ENCODE measurements at regions of chr18 and their contacts with region 1.

Region 1: GRCh38 chr18:9102508-9103375 is at the start of gene NDUFV2:
- DNase-seq: peak; percentile 98 to 99
- ATAC-seq: peak; percentile 98 to 100 (median 99)
- H3K4me3 ChIP-seq: peak within 1 kb of the TSS; percentile 55 to 85 (median 74)
- H3K27ac ChIP-seq: peak within 1 kb of the TSS; percentile 86 to 98 (median 94)
- H3K4me1 ChIP-seq: peaks cover 9 to 52% (median 51%) of the 10 kb centered on the region in 9 donors
- H3K27me3 ChIP-seq: no peaks in the 10 kb centered on the region
- CTCF ChIP-seq: peak in 1 of 9 donors; percentile 11
- total RNA-seq, gene NDUFV2: 362 to 529 (median 480) TPM

Region 2: GRCh38 chr18:9038277-9038871 is 64.4 kb before region 1 on chr18:
- intact Hi-C with region 1: no loop called
- DNase-seq: no peak
- ATAC-seq: no peak
- H3K4me3 ChIP-seq: no peak overlapping the region
- H3K27ac ChIP-seq: no peak overlapping the region
- H3K4me1 ChIP-seq: no peaks in the 10 kb centered on the region
- H3K27me3 ChIP-seq: no peaks in the 10 kb centered on the region
- CTCF ChIP-seq: no peak

Region 3: GRCh38 chr18:9082711-9083510 is 19.8 kb before region 1 on chr18:
- intact Hi-C with region 1: loop called in 1 of 10 experiments (anchors 2 kb)
- DNase-seq: no peak
- ATAC-seq: peak in 2 of 8 donors; percentile 56 to 57
- H3K4me3 ChIP-seq: no peak overlapping the region
- H3K27ac ChIP-seq: peak overlapping the region in 1 of 10 donors; percentile 77
- H3K4me1 ChIP-seq: peaks cover 0 to 57% (median 0%) of the 10 kb centered on the region in 9 donors
- H3K27me3 ChIP-seq: no peaks in the 10 kb centered on the region
- CTCF ChIP-seq: no peak

Region 4: DNA sequence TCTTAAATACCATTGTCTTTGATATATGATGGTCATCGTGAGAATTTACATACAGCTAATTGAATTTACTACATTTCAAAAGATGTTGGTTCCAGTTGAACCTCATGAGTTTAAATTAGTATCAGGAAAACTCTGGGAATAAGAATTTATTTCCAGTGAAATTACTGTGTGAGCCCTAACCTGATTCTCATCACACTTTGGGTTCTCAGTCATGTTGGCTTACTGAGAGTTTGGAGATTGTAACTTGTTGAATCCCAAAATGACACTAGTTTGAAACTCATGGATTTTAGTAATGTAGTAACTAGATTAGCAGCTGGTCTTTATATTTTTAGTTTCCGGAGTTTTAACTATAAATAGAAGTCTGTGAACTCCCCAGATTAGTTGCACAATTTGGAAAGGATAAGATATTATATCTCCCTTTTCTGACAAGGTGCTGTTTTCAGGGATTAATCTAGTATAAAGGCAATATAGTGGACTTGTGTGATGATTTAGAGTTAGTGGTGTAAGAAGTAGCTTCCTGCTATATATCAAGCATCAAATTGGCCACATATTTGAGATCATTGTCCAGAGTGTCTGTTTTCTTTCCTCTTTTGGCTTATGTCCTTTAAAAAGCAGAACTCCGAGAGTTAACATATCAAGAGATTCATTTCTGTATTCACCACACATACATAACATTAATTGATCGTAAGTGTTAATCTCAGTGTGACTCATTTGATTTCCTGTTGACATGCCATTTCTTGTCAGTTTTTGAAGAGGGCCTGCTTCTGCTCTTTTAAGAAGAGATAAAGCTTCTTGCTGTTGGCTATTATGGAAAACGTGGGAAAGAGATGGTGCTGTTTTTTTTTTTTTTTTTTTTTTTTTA is 15.5 kb after region 1 on chr18:
- intact Hi-C with region 1: loop called in 1 of 10 experiments (anchors 2 kb)
- DNase-seq: no peak
- ATAC-seq: peak in 6 of 8 donors; percentile 12 to 61 (median 26)
- H3K4me3 ChIP-seq: peak overlapping the region in 3 of 10 donors; percentile 5 to 37 (median 17)
- H3K27ac ChIP-seq: peak overlapping the region in 9 of 10 donors; percentile 8 to 89 (median 64)
- H3K4me1 ChIP-seq: peaks cover 11 to 97% (median 90%) of the 10 kb centered on the region in 9 donors
- H3K27me3 ChIP-seq: no peaks in the 10 kb centered on the region
- CTCF ChIP-seq: no peak

Region 5: GRCh38 chr18:9136315-9137155 is 33.8 kb after region 1 on chr18 and contains the start of gene ANKRD12:
- intact Hi-C with region 1: loop called in 9 of 10 experiments (anchors 1 to 5 kb)
- DNase-seq: peak; percentile 97 to 99
- ATAC-seq: peak; percentile 96 to 99 (median 97)
- H3K4me3 ChIP-seq: peak within 1 kb of the TSS; percentile 61 to 94 (median 80)
- H3K27ac ChIP-seq: peak within 1 kb of the TSS; percentile 92 to 99 (median 98)
- H3K4me1 ChIP-seq: peaks cover 0 to 65% (median 47%) of the 10 kb centered on the region in 9 donors
- H3K27me3 ChIP-seq: no peaks in the 10 kb centered on the region
- CTCF ChIP-seq: no peak
- total RNA-seq, gene ANKRD12: 34.5 to 70.2 (median 55.5) TPM

Region 6: GRCh38 chr18:9147440-9148202 is 44.9 kb after region 1 on chr18:
- intact Hi-C with region 1: loop called in 2 of 10 experiments (anchors 2 to 5 kb)
- DNase-seq: peak in 1 of 2 donors; percentile 37
- ATAC-seq: peak; percentile 81 to 91 (median 87)
- H3K4me3 ChIP-seq: no peak overlapping the region
- H3K27ac ChIP-seq: peak overlapping the region in 2 of 10 donors; percentile 42 to 69
- H3K4me1 ChIP-seq: peaks cover 2 to 100% (median 80%) of the 10 kb centered on the region in 9 donors
- H3K27me3 ChIP-seq: no peaks in the 10 kb centered on the region
- CTCF ChIP-seq: peak; percentile 59 to 90 (median 79)

Region 7: DNA sequence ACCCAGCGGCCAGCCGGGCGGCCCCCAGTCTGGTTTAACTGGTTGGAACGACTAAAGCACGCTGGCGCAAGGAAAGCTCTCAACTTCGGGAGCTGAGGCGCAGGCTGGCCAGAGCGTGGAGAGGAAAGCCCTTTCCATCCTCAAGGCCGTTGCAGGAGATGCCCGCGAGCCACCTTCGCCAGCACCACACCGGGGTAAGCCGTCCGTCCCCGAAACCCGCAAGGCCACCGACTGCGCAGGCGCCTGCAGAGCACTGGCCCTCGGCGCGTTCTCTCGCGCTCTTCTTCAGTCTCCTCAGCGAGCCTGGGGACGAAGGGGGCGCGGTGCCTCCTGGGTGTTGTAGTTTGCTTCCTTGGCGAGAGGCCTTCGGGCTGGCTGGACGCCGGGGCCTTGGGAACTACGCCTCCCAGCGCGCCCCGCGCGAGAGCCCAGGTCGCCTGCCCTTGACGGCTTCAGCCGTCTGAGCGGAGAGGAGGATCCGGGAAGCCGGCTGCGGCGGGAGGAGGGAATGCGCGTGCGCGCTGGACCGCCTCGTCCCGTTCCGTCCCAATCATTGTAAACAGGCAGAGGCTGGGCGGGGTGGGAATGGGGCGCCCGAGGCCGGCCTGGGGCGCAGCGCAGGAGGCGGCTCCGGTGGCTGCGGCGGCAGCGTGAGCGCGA is 372.4 kb after region 1 on chr18 and contains the start of gene RALBP1:
- intact Hi-C with region 1: loop called in 1 of 10 experiments (anchors 5 kb)
- DNase-seq: peak; percentile 99 to 100
- ATAC-seq: peak; percentile 97 to 100 (median 99)
- H3K4me3 ChIP-seq: peak within 1 kb of the TSS; percentile 63 to 98 (median 92)
- H3K27ac ChIP-seq: peak within 1 kb of the TSS; percentile 81 to 97 (median 93)
- H3K4me1 ChIP-seq: peaks cover 0 to 29% (median 22%) of the 10 kb centered on the region in 9 donors
- H3K27me3 ChIP-seq: no peaks in the 10 kb centered on the region
- CTCF ChIP-seq: peak in 4 of 9 donors; percentile 26 to 52 (median 50)
- total RNA-seq, gene RALBP1: 39.3 to 53.8 (median 41.8) TPM

Region 8: DNA sequence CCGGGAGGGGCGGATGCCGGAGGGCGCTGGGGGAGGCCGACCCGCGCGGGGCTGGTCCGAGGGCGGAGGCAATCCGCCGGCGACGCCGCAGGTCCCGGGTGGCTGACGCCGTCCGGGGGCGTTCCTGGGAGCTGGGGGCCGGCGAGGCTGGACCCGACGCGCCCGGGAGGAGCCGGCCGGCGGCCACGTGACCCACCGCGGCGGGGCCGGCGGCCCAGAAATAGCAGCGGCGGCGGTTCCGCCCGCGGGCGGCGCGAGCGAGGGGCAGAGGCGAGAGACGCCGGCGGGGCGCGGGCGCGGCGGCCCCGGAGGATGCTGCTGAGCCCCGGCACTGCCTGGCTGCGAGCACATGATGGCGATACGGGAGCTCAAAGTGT is 605.3 kb after region 1 on chr18 and contains the start of gene RAB31:
- intact Hi-C with region 1: no loop called
- DNase-seq: peak; percentile 78 to 86
- ATAC-seq: peak; percentile 87 to 97 (median 92)
- H3K4me3 ChIP-seq: peak within 1 kb of the TSS; percentile 23 to 89 (median 78)
- H3K27ac ChIP-seq: peak within 1 kb of the TSS; percentile 75 to 96 (median 88)
- H3K4me1 ChIP-seq: peaks cover 0 to 69% (median 18%) of the 10 kb centered on the region in 9 donors
- H3K27me3 ChIP-seq: no peaks in the 10 kb centered on the region
- CTCF ChIP-seq: no peak
- total RNA-seq, gene RAB31: 12.7 to 47.8 (median 17.0) TPM

Measured in heart right ventricle (tissue), 16 donors.